ENCODE measurements at regions of chr3 and their contacts with region 1.

Region 1: GRCh38 chr3:52444860-52445793 is at the start of gene SEMA3G:
- DNase-seq: peak; percentile 90
- total RNA-seq, gene SEMA3G: 12.4 to 17.7 TPM

Region 2: DNA sequence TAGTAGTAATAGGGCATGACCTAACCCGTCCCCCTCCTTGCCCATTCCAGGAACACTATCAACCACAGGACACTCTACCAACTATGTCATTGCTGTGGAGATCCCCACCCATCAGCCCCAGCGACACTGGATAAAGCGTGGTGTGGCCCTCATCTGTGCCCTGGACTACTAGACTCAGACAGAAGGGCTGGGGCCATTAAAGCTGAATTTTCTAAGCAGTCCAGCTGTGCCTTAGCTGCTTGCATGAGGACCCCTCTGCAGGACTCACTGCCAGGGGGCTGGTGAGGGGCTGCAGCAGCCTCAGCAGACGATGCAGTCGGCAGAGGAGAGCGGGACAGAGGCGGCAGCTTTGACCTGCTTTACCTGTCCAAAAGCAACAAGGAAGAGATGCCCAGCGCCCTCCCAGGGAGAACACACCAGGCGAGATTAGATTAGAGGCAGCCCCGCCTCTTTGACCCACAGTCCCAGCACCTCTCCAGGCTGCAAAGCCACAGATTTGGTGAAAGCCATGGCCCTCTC is 44.8 kb before region 1 on chr3:
- intact Hi-C with region 1: no loop called
- DNase-seq: peak; percentile 63

Region 3: GRCh38 chr3:52428151-52429005 is 16.7 kb before region 1 on chr3:
- intact Hi-C with region 1: loop called (anchors 1 to 2 kb)
- DNase-seq: peak; percentile 74

Region 4: DNA sequence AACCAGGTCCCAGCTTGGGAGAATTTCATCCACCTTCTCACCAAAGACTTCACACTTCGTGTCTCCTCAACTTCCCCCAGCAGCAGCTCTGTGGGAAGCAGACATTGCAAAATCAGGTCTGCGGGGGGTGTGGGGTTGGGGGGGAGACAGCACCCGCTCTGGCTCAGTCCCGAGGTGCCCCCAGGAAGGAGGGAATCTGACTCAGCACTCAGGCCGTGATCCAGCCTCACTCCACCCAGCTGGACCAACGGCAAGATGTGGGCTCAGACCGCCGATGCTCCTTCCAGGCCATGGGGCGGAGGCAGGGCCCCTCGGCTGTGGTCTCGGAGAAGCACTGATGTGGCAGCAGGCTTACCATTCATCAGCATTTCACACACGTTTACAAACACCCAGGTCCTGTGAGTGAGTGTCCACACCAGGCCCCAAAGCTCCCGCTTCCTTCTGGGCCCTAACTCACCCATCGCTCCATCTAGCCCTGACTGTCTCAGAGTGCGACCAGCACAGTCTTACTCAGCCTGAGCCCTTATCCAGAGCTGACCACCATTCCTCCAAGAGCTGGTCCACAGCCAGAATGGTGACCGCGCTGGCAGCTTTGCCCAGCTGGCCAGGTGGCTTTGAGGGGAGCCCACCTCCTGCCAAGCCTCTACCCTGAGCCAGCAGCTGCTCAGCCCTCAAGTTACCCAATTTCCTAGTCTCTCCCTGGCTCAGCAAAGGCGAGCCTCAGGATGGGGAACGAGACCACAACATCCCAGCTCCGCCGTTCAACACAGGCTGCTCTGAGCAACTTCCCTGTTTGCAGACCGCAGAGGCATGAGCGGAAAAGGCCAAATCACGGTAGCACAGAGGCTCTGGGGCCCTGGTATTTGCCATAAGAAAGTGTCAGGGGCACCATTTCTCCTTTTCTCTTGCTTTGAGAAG is 53.3 kb after region 1 on chr3:
- intact Hi-C with region 1: no loop called
- DNase-seq: peak; percentile 92